CD4-positive, alpha-beta memory T cell (primary cell): ENCODE measurements at regions of chr12 and their contacts with region 1.

Region 1: GRCh38 chr12:89862511-89863179 is 154.0 kb upstream of the ATP2B1 start:
- DNase-seq: peak; percentile 68 to 79 (median 75)
- H3K4me3 ChIP-seq: peak overlapping the region; percentile 26 to 39
- H3K4me3 Mint-ChIP-seq: peak overlapping the region; percentile 69 to 87 (median 82)
- H3K27ac ChIP-seq: peak overlapping the region; percentile 95
- H3K27ac Mint-ChIP-seq: peak overlapping the region; percentile 91 to 99 (median 99)
- H3K4me1 ChIP-seq: peaks cover 62% of the 10 kb centered on the region
- H3K4me1 Mint-ChIP-seq: peaks cover 56 to 81% (median 68%) of the 10 kb centered on the region in 4 donors
- H3K27me3 ChIP-seq: no peaks in the 10 kb centered on the region
- H3K27me3 Mint-ChIP-seq: no peaks in the 10 kb centered on the region

Region 2: DNA sequence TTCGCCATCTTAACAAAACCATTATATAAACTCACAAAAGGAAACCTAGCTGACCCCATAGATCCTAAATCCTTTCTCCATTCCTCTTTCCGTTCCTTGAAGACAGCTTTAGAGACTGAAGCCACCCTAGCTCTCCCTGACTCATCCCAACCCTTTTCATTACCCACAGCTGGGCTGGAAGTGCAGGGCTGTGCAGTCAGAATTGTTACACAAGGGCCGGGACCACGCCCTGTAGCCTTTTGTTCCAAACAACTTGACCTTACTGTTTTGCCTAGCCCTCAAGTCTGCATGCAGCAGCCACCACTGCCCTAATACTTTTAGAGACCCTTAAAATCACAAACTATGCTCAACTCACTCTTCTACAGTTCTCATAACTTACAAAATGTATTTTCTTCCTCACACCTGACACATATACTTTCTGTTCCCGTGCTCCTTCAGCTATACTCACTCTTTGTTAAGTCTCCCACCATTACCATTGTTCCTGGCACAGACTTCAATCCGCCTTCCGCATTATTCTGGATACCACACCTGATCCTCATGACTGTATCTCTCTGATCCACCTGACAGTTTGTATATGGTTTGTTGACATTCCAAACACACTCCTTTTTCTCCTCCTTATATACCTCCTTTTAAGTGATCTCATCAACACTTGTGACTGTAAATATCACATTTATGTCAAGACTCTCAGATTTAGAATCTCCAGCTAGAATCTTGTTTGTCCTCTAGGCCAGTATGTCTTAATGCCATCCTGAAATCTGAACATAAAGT is 1491.0 kb before region 1 on chr12:
- CTCF ChIA-PET with region 1: no interaction called
- POLR2A ChIA-PET with region 1: no interaction called
- intact Hi-C with region 1: no loop called
- DNase-seq: no peak
- H3K4me3 ChIP-seq: no peak overlapping the region
- H3K4me3 Mint-ChIP-seq: no peak overlapping the region
- H3K27ac ChIP-seq: no peak overlapping the region
- H3K27ac Mint-ChIP-seq: no peak overlapping the region
- H3K4me1 ChIP-seq: no peaks in the 10 kb centered on the region
- H3K4me1 Mint-ChIP-seq: no peaks in the 10 kb centered on the region
- H3K27me3 ChIP-seq: no peaks in the 10 kb centered on the region
- H3K27me3 Mint-ChIP-seq: no peaks in the 10 kb centered on the region

Region 3: GRCh38 chr12:89756585-89757321 is 105.9 kb before region 1 on chr12:
- CTCF ChIA-PET with region 1: interaction called, 5 read pairs
- POLR2A ChIA-PET with region 1: interaction called, 16 read pairs
- intact Hi-C with region 1: loop called (anchors 1 kb)
- DNase-seq: peak; percentile 33 to 63 (median 59)
- H3K4me3 ChIP-seq: no peak overlapping the region
- H3K4me3 Mint-ChIP-seq: peak overlapping the region in 3 of 8 donors; percentile 21 to 60 (median 47)
- H3K27ac ChIP-seq: no peak overlapping the region
- H3K27ac Mint-ChIP-seq: peak overlapping the region; percentile 54 to 92 (median 76)
- H3K4me1 ChIP-seq: peaks cover 43% of the 10 kb centered on the region
- H3K4me1 Mint-ChIP-seq: peaks cover 38 to 54% (median 44%) of the 10 kb centered on the region in 4 donors
- H3K27me3 ChIP-seq: no peaks in the 10 kb centered on the region
- H3K27me3 Mint-ChIP-seq: no peaks in the 10 kb centered on the region

Region 4: DNA sequence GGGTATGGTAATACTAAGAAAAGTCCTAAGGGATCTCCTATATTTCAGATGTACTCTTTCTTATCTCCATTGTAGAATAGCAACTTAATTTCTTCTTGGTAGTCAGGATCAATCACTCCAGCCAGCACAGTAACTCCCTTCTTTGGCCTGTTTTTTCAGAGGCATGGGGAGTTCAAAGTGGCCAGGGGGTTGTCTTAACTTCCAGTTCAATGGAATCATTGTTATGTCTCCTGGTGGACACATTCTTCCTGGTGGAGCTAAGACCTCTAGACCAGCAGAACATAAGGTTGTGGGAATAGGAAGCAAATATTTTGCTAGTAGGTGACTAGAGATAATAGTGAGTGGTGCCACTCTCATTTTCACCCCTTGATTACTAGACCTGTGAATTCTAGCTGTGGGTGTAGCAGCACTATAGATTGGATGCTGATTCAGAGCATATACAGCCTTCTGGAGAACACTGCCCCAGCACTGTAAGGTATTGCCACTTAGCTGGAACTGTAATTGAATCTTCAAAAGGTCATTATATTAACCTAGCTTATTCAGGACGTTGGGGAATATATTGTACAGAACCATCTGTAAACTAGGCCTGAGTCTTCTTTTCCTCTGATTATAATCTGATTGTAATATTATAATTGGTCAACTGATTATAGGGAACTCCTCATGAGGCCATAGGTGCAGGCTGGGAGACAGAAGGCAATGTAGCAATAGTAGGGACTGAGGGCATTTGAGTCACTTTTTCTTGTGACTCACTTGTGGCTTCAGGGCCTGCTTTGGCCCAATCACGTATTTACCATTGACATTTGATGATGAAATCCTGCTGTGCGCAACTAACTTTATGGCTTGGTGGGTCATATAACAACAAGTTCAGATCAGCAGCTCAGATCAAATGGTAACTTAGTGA is 93.8 kb before region 1 on chr12:
- CTCF ChIA-PET with region 1: interaction called, 7 read pairs
- POLR2A ChIA-PET with region 1: interaction called, 16 read pairs
- intact Hi-C with region 1: no loop called
- DNase-seq: no peak
- H3K4me3 ChIP-seq: no peak overlapping the region
- H3K4me3 Mint-ChIP-seq: peak overlapping the region in 2 of 8 donors; percentile 15 to 20
- H3K27ac ChIP-seq: no peak overlapping the region
- H3K27ac Mint-ChIP-seq: peak overlapping the region in 3 of 7 donors; percentile 9 to 46 (median 15)
- H3K4me1 ChIP-seq: peaks cover 42% of the 10 kb centered on the region
- H3K4me1 Mint-ChIP-seq: peaks cover 40 to 78% (median 58%) of the 10 kb centered on the region in 4 donors
- H3K27me3 ChIP-seq: no peaks in the 10 kb centered on the region
- H3K27me3 Mint-ChIP-seq: no peaks in the 10 kb centered on the region

Region 5: GRCh38 chr12:89927226-89927698 is 64.6 kb after region 1 on chr12:
- CTCF ChIA-PET with region 1: no interaction called
- POLR2A ChIA-PET with region 1: interaction called, 17 read pairs
- intact Hi-C with region 1: no loop called
- DNase-seq: peak in 2 of 5 donors; percentile 11 to 32
- H3K4me3 ChIP-seq: no peak overlapping the region
- H3K4me3 Mint-ChIP-seq: peak overlapping the region in 6 of 8 donors; percentile 2 to 69 (median 42)
- H3K27ac ChIP-seq: no peak overlapping the region
- H3K27ac Mint-ChIP-seq: peak overlapping the region in 6 of 7 donors; percentile 15 to 73 (median 58)
- H3K4me1 ChIP-seq: peaks cover 10% of the 10 kb centered on the region
- H3K4me1 Mint-ChIP-seq: peaks cover 8 to 10% (median 9%) of the 10 kb centered on the region in 4 donors
- H3K27me3 ChIP-seq: no peaks in the 10 kb centered on the region
- H3K27me3 Mint-ChIP-seq: no peaks in the 10 kb centered on the region

Region 6: DNA sequence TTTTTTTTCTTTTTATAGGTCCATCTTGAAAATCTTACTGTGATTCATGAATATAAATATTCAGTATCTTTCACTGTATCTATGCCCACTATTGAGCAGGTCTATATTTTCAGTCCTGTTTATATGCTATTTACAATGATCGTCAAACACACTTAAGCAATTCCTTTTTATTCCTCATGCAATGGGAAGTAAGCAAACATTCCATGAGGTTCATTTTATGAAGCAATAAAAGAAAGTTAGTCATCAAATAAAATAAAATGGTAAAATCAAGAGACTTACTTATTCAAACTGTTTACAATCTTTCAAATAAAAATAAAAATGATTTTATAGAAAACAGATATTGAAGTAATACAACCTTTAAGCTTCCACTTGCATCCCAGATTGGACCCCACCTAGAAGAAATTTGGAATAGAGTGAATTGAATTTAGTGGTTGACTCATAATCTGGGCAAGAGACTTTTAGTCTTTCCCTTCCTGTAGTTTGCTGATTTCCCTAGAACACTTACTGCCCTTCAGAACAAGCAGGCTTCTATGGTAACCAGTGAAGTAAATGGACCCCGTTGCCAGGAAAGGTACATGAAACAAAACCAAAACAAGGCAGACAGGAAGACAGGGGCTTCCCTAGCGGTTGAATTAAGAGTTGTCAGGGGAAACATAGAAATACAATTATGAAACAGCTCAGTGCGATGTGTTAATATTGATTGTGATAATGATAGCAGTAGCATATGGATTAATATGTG is 87.0 kb after region 1 on chr12:
- CTCF ChIA-PET with region 1: interaction called, 27 read pairs
- POLR2A ChIA-PET with region 1: interaction called, 99 read pairs
- intact Hi-C with region 1: loop called (anchors 1 kb)
- DNase-seq: peak; percentile 87 to 94 (median 90)
- H3K4me3 ChIP-seq: no peak overlapping the region
- H3K4me3 Mint-ChIP-seq: peak overlapping the region; percentile 11 to 77 (median 59)
- H3K27ac ChIP-seq: peak overlapping the region; percentile 83
- H3K27ac Mint-ChIP-seq: peak overlapping the region; percentile 74 to 98 (median 93)
- H3K4me1 ChIP-seq: peaks cover 53% of the 10 kb centered on the region
- H3K4me1 Mint-ChIP-seq: peaks cover 49 to 64% (median 58%) of the 10 kb centered on the region in 4 donors
- H3K27me3 ChIP-seq: no peaks in the 10 kb centered on the region
- H3K27me3 Mint-ChIP-seq: no peaks in the 10 kb centered on the region